Mammary epithelial cell (primary cell): ENCODE measurements at regions of chr15 and their contacts with region 1.

Region 1: GRCh38 chr15:69394556-69395282 is 19.4 kb upstream of the KIF23 start:
- DNase-seq: peak; percentile 42
- H3K4me3 ChIP-seq: no peak overlapping the region
- H3K27ac ChIP-seq: peak overlapping the region; percentile 42
- H3K4me1 ChIP-seq: peaks cover 47% of the 10 kb centered on the region
- H3K27me3 ChIP-seq: no peaks in the 10 kb centered on the region
- CTCF ChIP-seq: peak; percentile 84 to 91

Region 2: GRCh38 chr15:69225355-69226025 is 169.2 kb before region 1 on chr15:
- CTCF ChIA-PET with region 1: no interaction called
- dilution Hi-C with region 1: no loop called
- in situ Hi-C with region 1: no loop called
- intact Hi-C with region 1: loop called (anchors 10 kb)
- DNase-seq: peak; percentile 14
- H3K4me3 ChIP-seq: no peak overlapping the region
- H3K27ac ChIP-seq: no peak overlapping the region
- H3K4me1 ChIP-seq: peaks cover 6% of the 10 kb centered on the region
- H3K27me3 ChIP-seq: no peaks in the 10 kb centered on the region
- CTCF ChIP-seq: peak; percentile 16 to 42

Region 3: GRCh38 chr15:69265347-69265955 is 129.3 kb before region 1 on chr15:
- CTCF ChIA-PET with region 1: no interaction called
- dilution Hi-C with region 1: no loop called
- in situ Hi-C with region 1: no loop called
- intact Hi-C with region 1: loop called (anchors 1 kb)
- DNase-seq: peak; percentile 23
- H3K4me3 ChIP-seq: no peak overlapping the region
- H3K27ac ChIP-seq: no peak overlapping the region
- H3K4me1 ChIP-seq: no peaks in the 10 kb centered on the region
- H3K27me3 ChIP-seq: no peaks in the 10 kb centered on the region
- CTCF ChIP-seq: peak; percentile 33 to 61

Region 4: DNA sequence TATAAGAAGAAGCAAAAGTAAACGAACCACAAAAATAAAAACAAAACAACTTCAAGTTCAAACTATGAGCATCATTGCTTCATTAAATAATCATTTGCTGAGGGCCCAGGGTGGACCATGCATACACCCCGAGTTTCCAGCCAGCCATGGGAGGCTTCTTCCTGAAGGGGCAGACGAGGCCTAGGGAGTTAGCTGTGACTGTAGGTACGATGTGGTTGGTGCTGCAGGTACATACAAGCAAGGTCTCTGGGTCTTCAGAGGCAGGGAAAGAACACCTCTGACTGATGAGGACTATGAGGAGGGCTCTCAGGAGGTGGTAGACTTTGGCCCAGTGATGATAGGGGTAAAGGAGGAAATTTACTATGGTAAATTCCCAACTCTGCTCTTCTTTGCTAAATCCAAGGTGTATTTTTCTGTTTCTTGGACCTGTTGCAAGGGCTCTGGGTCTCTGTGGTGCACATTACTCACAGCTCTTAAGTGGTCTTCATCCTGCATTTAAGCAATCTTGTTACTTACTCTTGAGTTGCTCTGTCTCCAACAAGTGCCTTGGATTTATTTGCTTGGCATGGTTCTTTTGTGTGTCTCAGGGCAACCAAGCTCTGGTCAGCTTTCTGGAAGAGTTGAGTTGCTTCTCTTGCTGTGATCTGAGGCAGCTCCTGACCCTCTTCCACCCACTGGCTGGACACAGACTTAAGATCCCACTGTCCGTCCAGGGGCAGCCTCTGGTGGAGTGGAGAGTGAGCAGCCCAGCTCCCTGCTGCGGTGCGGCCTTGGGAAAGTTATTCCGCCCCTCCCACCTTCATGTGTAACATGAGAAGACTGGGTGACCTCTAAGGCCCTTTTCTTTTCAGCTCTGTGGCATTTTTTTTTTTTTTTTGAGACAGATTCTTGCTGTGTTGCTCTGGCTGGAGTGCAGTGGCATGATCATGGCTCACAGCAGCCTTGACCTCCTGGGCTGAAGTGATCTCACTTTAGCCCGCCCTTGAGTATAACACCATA is 36.6 kb before region 1 on chr15:
- CTCF ChIA-PET with region 1: no interaction called
- dilution Hi-C with region 1: no loop called
- in situ Hi-C with region 1: no loop called
- intact Hi-C with region 1: no loop called
- DNase-seq: no peak
- H3K4me3 ChIP-seq: no peak overlapping the region
- H3K27ac ChIP-seq: no peak overlapping the region
- H3K4me1 ChIP-seq: no peaks in the 10 kb centered on the region
- H3K27me3 ChIP-seq: no peaks in the 10 kb centered on the region
- CTCF ChIP-seq: no peak